WTC11 (cell line): ENCODE measurements at regions of chr4 and their contacts with region 1.

Region 1: DNA sequence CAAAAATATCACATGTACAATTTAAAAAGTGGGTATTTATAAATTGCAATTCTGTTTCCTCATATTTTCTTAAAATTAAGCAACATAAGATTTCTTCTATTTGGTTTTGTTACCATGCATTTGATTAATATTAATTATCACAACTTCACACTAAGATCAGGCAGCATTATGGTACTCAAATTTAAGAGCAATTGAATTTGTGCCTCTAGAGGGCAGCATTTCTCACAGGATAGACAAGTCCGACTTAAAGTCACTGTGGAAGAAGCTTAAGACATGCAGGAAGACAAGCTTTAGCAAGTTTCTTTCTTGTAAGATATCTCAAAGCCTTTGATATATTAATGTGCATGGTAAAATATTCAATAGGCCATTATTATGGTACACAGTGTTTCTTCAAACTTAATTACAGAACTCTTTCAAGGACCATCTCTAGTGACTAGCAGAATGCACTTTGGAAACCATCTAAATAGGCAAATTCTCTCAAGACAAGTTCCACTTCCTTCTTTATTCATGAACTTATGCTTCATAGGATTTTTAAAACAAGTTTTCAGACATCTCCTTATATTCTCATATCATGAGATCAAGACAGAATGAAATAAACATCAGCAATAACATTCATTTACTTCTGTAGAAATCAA is 35.0 kb downstream of the FBXW7 start:
- DNase-seq: peak; percentile 25
- ATAC-seq: peak; percentile 68
- H3K4me3 Mint-ChIP-seq: no peak overlapping the region
- H3K27ac Mint-ChIP-seq: no peak overlapping the region
- H3K4me1 Mint-ChIP-seq: peaks cover 33% of the 10 kb centered on the region
- H3K27me3 Mint-ChIP-seq: no peaks in the 10 kb centered on the region
- CTCF ChIP-seq: peak; percentile 47; the same call in 1 of the 2 replicates

Region 2: DNA sequence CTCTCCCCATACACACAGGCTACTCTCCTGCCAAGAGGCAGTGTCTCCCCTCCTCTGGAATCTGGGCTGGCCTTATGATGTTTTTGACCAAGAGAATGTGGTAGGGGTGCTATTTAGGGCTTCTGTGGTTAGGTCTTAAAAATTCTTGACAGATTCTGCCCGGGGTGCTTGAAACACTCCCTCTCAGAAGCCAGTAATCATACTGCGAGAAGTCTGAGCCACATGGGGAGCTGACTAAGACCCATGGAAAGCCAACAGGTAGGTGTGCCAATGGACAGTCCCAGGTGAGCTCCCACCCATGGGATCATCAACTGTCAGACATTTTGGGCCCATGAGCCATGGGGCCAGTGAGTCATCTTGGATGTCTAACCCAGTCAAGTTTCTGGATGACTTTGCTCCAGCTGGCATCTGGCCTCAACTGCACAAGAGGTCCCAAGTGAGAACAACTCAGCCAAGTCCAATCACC is 280.7 kb before region 1 on chr4:
- CTCF ChIA-PET with region 1: no interaction called
- POLR2A ChIA-PET with region 1: no interaction called
- DNase-seq: no peak
- ATAC-seq: no peak
- H3K4me3 Mint-ChIP-seq: no peak overlapping the region
- H3K27ac Mint-ChIP-seq: no peak overlapping the region
- H3K4me1 Mint-ChIP-seq: peaks cover 12% of the 10 kb centered on the region
- H3K27me3 Mint-ChIP-seq: no peaks in the 10 kb centered on the region
- CTCF ChIP-seq: no peak

Region 3: DNA sequence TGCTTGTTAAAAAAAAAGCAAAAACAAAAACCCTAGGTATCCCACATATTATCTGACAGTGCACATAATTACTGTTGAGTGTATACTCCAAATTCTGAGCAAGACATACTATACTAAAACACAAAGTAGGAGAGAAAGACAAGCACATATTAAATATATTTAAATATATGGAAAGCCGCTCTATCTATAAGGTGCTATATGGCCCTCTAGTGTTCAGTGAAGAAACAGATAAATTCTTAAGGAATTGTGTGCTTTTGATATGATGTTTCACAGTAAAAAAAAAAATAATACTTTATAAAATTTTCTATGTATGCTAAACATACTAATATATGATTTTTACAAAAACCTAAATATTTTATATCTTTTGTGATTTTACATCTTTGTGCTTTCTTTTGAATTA is 102.9 kb before region 1 on chr4:
- CTCF ChIA-PET with region 1: no interaction called
- POLR2A ChIA-PET with region 1: no interaction called
- DNase-seq: no peak
- ATAC-seq: no peak
- H3K4me3 Mint-ChIP-seq: no peak overlapping the region
- H3K27ac Mint-ChIP-seq: no peak overlapping the region
- H3K4me1 Mint-ChIP-seq: peaks cover 5% of the 10 kb centered on the region
- H3K27me3 Mint-ChIP-seq: no peaks in the 10 kb centered on the region
- CTCF ChIP-seq: no peak

Region 4: GRCh38 chr4:152485726-152486276 is 15.1 kb before region 1 on chr4:
- CTCF ChIA-PET with region 1: interaction called, 18 read pairs
- POLR2A ChIA-PET with region 1: no interaction called
- DNase-seq: no peak
- ATAC-seq: no peak
- H3K4me3 Mint-ChIP-seq: no peak overlapping the region
- H3K27ac Mint-ChIP-seq: no peak overlapping the region
- H3K4me1 Mint-ChIP-seq: no peaks in the 10 kb centered on the region
- H3K27me3 Mint-ChIP-seq: no peaks in the 10 kb centered on the region
- CTCF ChIP-seq: no peak

Region 5: GRCh38 chr4:152522754-152523153 is 21.8 kb after region 1 on chr4:
- CTCF ChIA-PET with region 1: interaction called, 24 read pairs
- POLR2A ChIA-PET with region 1: no interaction called
- DNase-seq: no peak
- ATAC-seq: no peak
- H3K4me3 Mint-ChIP-seq: no peak overlapping the region
- H3K27ac Mint-ChIP-seq: no peak overlapping the region
- H3K4me1 Mint-ChIP-seq: peaks cover 36% of the 10 kb centered on the region
- H3K27me3 Mint-ChIP-seq: no peaks in the 10 kb centered on the region
- CTCF ChIP-seq: no peak

Region 6: DNA sequence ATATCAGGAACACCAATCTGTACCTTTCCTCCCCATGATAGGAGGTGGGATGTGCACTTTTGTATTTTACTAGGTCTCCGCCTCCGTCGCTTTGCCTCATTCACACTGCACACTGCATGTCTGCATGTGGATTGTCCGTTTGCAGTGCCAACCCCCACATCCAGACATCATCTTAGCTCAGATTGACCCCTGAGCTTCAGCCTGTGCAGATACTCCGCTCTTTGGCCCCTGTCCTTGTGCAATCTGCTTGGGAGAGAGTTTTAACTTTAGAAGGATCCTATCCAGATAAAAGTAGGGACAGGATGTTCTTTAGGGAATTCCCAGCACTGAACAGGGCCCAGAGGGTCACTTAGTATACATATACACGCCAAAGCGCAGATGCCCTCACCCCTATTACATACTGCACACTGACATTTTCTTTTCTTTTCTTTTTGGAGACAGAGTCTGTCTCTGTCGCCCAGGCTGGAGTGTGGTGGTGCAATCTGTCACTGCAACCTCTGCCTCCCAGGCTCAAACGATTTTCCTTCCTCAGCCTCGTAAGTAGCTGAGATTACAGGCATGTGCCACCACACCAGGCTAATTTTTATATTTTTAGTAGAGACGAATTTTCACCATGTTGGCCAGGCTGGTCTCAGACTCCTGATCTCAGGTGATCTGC is 78.3 kb after region 1 on chr4:
- CTCF ChIA-PET with region 1: interaction called, 12 read pairs
- POLR2A ChIA-PET with region 1: no interaction called
- DNase-seq: no peak
- ATAC-seq: no peak
- H3K4me3 Mint-ChIP-seq: no peak overlapping the region
- H3K27ac Mint-ChIP-seq: peak overlapping the region; percentile 35; the same call in 1 of the 2 replicates
- H3K4me1 Mint-ChIP-seq: peaks cover 9% of the 10 kb centered on the region
- H3K27me3 Mint-ChIP-seq: no peaks in the 10 kb centered on the region
- CTCF ChIP-seq: no peak

Region 7: GRCh38 chr4:152679414-152680281 is 178.7 kb after region 1 on chr4 and contains the start of gene TMEM154:
- CTCF ChIA-PET with region 1: interaction called, 10 read pairs
- POLR2A ChIA-PET with region 1: no interaction called
- DNase-seq: peak; percentile 73
- ATAC-seq: peak; percentile 91
- H3K4me3 Mint-ChIP-seq: peak within 1 kb of the TSS; percentile 73
- H3K27ac Mint-ChIP-seq: no peak within 1 kb of the TSS
- H3K4me1 Mint-ChIP-seq: peaks cover 47% of the 10 kb centered on the region
- H3K27me3 Mint-ChIP-seq: peaks cover 17% of the 10 kb centered on the region
- CTCF ChIP-seq: no peak
- total RNA-seq, gene TMEM154: 1.7 to 2.1 TPM (median 1.9 TPM) in 3 replicates

Region 8: GRCh38 chr4:152690706-152691651 is 190.1 kb after region 1 on chr4:
- CTCF ChIA-PET with region 1: no interaction called
- POLR2A ChIA-PET with region 1: no interaction called
- DNase-seq: no peak
- ATAC-seq: no peak
- H3K4me3 Mint-ChIP-seq: no peak overlapping the region
- H3K27ac Mint-ChIP-seq: no peak overlapping the region
- H3K4me1 Mint-ChIP-seq: peaks cover 35% of the 10 kb centered on the region
- H3K27me3 Mint-ChIP-seq: no peaks in the 10 kb centered on the region
- CTCF ChIP-seq: no peak

Region 9: DNA sequence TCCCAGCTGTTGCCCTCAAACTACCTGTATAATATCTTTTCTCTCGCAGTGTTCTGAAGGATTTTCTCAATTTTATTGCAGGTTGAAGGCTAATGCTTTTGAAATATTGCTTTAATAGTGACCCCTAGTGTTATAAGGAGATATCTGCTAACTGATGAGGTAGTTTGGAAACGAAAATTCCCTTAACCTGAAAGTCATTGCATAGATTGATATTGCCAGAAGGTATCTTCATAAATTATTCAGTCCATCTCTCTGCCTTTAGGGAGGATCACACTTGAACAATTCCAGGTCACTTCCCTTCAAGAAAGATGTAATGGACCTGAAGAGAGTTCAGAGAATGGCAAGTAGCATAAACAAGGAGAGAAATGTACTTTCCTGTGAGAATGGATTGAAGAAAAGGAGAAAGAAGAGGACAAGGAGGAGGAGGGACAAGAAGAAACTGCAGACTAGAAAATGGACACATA is 234.5 kb after region 1 on chr4:
- CTCF ChIA-PET with region 1: interaction called, 22 read pairs
- POLR2A ChIA-PET with region 1: no interaction called
- DNase-seq: no peak
- ATAC-seq: peak; percentile 46; the same call in 1 of the 2 replicates
- H3K4me3 Mint-ChIP-seq: no peak overlapping the region
- H3K27ac Mint-ChIP-seq: peak overlapping the region; percentile 0
- H3K4me1 Mint-ChIP-seq: peaks cover 26% of the 10 kb centered on the region
- H3K27me3 Mint-ChIP-seq: no peaks in the 10 kb centered on the region
- CTCF ChIP-seq: no peak

Region 10: DNA sequence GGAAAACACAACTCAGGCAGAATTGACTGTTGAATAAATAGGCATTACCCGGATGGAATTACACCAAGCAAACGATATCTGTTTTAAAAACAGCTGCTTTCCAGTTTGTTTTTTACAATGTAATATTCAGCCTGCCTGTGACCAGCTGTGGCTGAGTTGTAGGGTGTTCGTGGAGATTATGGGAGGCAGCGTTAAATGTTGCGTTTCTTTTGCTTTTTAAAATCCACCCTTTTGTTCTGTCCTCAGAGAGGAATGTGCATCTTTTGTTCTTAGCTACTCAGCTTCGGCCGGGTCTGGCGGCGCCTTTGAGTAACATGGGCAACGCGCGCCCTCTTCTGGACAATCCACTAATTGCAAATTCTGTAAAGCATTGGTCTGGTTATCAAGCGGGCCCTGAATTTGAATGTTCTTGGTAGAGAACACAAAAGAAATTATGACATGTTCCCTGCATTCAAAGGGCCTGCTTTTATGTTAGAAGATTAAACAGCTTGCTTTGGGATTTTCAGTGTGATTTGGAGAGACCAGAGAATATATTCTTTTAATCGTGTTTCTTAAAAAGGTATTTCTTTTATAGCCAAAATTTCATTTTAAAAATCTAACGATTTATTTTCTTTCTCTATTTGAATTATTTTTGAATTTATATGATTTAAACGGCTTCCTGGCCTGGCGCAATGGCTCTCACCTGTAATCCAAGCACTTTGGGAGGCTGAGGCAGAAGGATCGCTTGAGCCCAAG is 627.0 kb after region 1 on chr4:
- CTCF ChIA-PET with region 1: interaction called, 10 read pairs
- POLR2A ChIA-PET with region 1: no interaction called
- DNase-seq: peak; percentile 91
- ATAC-seq: peak; percentile 78
- H3K4me3 Mint-ChIP-seq: peak overlapping the region; percentile 47
- H3K27ac Mint-ChIP-seq: peak overlapping the region; percentile 84
- H3K4me1 Mint-ChIP-seq: peaks cover 18% of the 10 kb centered on the region
- H3K27me3 Mint-ChIP-seq: peaks cover 2% of the 10 kb centered on the region; the same call in 1 of the 2 replicates
- CTCF ChIP-seq: peak; percentile 71